CD4-positive, alpha-beta memory T cell (primary cell): ENCODE measurements at regions of chr1 and their contacts with region 1.

Region 1: DNA sequence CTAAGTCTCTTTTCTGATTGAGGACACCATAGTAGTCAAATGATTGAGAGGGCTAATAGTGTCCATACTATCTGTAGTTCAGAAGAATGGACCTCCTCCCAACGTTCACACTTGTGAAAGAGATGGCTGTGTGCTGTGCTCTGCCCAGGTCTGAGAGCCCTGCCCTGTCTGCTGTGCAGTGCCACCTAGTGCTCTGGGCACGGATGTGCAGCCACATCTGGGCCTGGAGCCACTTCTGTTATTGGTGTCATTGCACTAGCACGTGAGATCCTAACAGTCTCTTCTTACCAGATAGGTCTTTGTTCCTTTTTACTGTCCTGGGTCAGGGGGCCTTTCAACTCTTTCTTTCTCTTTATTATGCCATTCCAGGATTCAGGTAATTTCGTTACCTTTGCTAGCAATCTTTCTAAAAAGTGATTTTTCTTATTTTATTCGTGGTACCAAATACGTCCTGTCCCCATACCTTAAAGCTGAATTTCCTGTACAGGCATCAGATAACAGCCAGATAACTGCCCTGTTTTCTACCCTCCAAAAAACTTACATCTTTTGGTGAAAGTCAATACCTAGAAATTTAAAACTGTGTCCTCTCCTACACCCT is 21.7 kb downstream of the INTS3 start:
- DNase-seq: peak; percentile 73 to 78 (median 77)
- H3K4me3 ChIP-seq: no peak overlapping the region
- H3K4me3 Mint-ChIP-seq: no peak overlapping the region
- H3K27ac ChIP-seq: no peak overlapping the region
- H3K27ac Mint-ChIP-seq: peak overlapping the region in 3 of 7 donors; percentile 6 to 73 (median 70)
- H3K4me1 ChIP-seq: no peaks in the 10 kb centered on the region
- H3K4me1 Mint-ChIP-seq: peaks cover 0 to 8% (median 5%) of the 10 kb centered on the region in 4 donors
- H3K27me3 ChIP-seq: no peaks in the 10 kb centered on the region
- H3K27me3 Mint-ChIP-seq: no peaks in the 10 kb centered on the region

Region 2: DNA sequence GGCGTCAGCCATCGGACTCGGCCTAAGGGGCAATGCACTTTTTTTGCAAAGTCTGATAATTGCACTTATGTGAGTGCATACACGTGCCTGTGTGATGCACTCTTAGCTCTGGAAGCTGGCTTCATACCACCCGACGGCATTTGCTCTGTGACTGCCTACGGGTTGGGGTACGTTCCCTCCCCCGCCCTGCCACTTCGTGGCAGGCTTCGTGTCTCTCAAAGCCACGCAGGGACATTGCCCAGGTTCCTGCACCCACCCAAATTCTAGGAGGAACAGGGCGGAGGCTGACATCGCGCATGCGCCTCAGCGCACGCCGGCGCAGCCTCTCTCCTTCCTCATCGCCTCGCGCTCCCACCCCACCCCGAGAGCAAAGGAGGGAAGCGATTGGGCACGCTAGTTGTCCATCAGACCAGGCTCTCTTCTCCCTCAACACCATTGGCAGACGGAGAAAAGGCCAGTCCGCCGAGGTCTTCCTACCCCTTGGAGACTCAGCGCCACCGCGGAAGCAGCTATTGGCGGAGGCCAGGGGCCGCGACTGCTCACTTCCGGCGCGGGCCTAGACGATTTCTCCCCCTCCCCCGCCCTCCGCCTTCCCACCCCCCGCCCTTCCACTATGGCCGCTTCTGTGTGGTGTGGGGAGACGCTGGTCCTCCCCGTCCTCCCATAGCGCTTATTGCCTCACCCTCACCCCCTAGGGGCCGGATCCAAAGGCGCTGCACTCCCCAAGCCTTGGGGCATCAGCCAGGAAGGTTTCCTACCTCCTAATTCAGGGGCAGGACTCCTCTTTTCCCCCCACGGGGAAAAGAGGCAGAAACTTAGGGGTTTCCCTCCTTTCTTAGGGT is 21.8 kb before region 1 on chr1 and contains the start of gene INTS3:
- CTCF ChIA-PET with region 1: no interaction called
- POLR2A ChIA-PET with region 1: interaction called, 4 read pairs
- intact Hi-C with region 1: loop called (anchors 1 kb)
- DNase-seq: peak; percentile 98 to 100 (median 99)
- H3K4me3 ChIP-seq: peak within 1 kb of the TSS; percentile 79 to 98
- H3K4me3 Mint-ChIP-seq: peak within 1 kb of the TSS; percentile 88 to 96 (median 93)
- H3K27ac ChIP-seq: peak within 1 kb of the TSS; percentile 93
- H3K27ac Mint-ChIP-seq: peak within 1 kb of the TSS; percentile 93 to 99 (median 97)
- H3K4me1 ChIP-seq: peaks cover 32% of the 10 kb centered on the region
- H3K4me1 Mint-ChIP-seq: peaks cover 19 to 36% (median 29%) of the 10 kb centered on the region in 4 donors
- H3K27me3 ChIP-seq: no peaks in the 10 kb centered on the region
- H3K27me3 Mint-ChIP-seq: no peaks in the 10 kb centered on the region
- total RNA-seq, gene INTS3: 49.1 to 53.0 TPM